Dorsolateral prefrontal cortex (tissue), 120 donors: ENCODE measurements at regions of chr10 and their contacts with region 1.

Region 1: GRCh38 chr10:101141616-101142532 is 10.8 kb downstream of the TLX1 start:
- DNase-seq: peak; percentile 68 to 85 (median 76)
- H3K4me3 ChIP-seq: no peak overlapping the region
- H3K27ac ChIP-seq: no peak overlapping the region
- H3K27me3 ChIP-seq: peaks cover 21 to 100% (median 97%) of the 10 kb centered on the region in 45 donors
- CTCF ChIP-seq: peak; percentile 77 to 98 (median 94)

Region 2: GRCh38 chr10:100743626-100744135 is 398.2 kb before region 1 on chr10:
- intact Hi-C with region 1: no loop called
- DNase-seq: peak in 1 of 10 donors; percentile 11
- H3K4me3 ChIP-seq: peak overlapping the region in 11 of 59 donors; percentile 6 to 67 (median 52)
- H3K27ac ChIP-seq: no peak overlapping the region
- H3K27me3 ChIP-seq: peaks cover 26 to 100% (median 99%) of the 10 kb centered on the region in 45 donors
- CTCF ChIP-seq: peak in 54 of 56 donors; percentile 19 to 70 (median 52)

Region 3: GRCh38 chr10:101095542-101096213 is 46.2 kb before region 1 on chr10:
- intact Hi-C with region 1: loop called (anchors 2 to 5 kb)
- DNase-seq: peak in 8 of 10 donors; percentile 10 to 58 (median 44)
- H3K4me3 ChIP-seq: no peak overlapping the region
- H3K27ac ChIP-seq: no peak overlapping the region
- H3K27me3 ChIP-seq: peaks cover 0 to 84% (median 38%) of the 10 kb centered on the region in 45 donors
- CTCF ChIP-seq: peak; percentile 43 to 81 (median 68)